ENCODE measurements at regions of chr2 and their contacts with region 1.

Region 1: GRCh38 chr2:213251618-213252017 is 32.6 kb upstream of the SPAG16 start:
- DNase-seq: no peak
- ATAC-seq: peak; percentile 77
- H3K4me3 Mint-ChIP-seq: no peak overlapping the region
- H3K27ac Mint-ChIP-seq: no peak overlapping the region
- H3K4me1 Mint-ChIP-seq: no peaks in the 10 kb centered on the region
- H3K27me3 Mint-ChIP-seq: peaks cover 3% of the 10 kb centered on the region
- CTCF ChIP-seq: peak; percentile 49

Region 2: GRCh38 chr2:212777020-212777491 is 474.6 kb before region 1 on chr2:
- CTCF ChIA-PET with region 1: no interaction called
- POLR2A ChIA-PET with region 1: no interaction called
- intact Hi-C with region 1: loop called (anchors 1 kb)
- DNase-seq: no peak
- ATAC-seq: peak; percentile 52
- H3K4me3 Mint-ChIP-seq: no peak overlapping the region
- H3K27ac Mint-ChIP-seq: no peak overlapping the region
- H3K4me1 Mint-ChIP-seq: peaks cover 3% of the 10 kb centered on the region
- H3K27me3 Mint-ChIP-seq: peaks cover 2% of the 10 kb centered on the region
- CTCF ChIP-seq: peak; percentile 73

Region 3: DNA sequence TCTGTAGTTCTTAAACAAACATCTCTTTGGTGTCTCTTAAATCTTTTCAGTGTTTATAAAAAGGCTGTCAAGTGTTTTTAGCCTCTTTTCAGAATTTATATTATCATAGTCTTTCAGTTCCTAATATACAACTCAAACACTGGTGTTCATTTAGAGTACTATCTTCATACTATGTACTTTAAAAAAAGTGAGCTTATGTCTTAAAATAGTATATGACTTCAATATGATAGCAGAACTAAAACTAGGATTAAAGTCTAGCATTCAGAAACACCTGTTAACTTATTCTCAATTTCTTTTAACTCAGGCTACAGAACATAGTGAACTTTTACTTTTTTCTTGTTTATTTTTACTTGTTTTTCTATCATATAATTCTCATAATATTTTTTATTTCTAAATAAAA is 85.5 kb before region 1 on chr2:
- CTCF ChIA-PET with region 1: no interaction called
- POLR2A ChIA-PET with region 1: no interaction called
- intact Hi-C with region 1: no loop called
- DNase-seq: no peak
- ATAC-seq: peak; percentile 86
- H3K4me3 Mint-ChIP-seq: peak overlapping the region; percentile 30
- H3K27ac Mint-ChIP-seq: peak overlapping the region; percentile 93
- H3K4me1 Mint-ChIP-seq: peaks cover 40% of the 10 kb centered on the region
- H3K27me3 Mint-ChIP-seq: no peaks in the 10 kb centered on the region
- CTCF ChIP-seq: no peak

Region 4: GRCh38 chr2:213232649-213233437 is 18.8 kb before region 1 on chr2:
- CTCF ChIA-PET with region 1: no interaction called
- POLR2A ChIA-PET with region 1: no interaction called
- intact Hi-C with region 1: loop called (anchors 1 kb)
- DNase-seq: peak; percentile 50
- ATAC-seq: peak; percentile 95
- H3K4me3 Mint-ChIP-seq: peak overlapping the region; percentile 64
- H3K27ac Mint-ChIP-seq: peak overlapping the region; percentile 85
- H3K4me1 Mint-ChIP-seq: peaks cover 81% of the 10 kb centered on the region
- H3K27me3 Mint-ChIP-seq: no peaks in the 10 kb centered on the region
- CTCF ChIP-seq: no peak

Region 5: DNA sequence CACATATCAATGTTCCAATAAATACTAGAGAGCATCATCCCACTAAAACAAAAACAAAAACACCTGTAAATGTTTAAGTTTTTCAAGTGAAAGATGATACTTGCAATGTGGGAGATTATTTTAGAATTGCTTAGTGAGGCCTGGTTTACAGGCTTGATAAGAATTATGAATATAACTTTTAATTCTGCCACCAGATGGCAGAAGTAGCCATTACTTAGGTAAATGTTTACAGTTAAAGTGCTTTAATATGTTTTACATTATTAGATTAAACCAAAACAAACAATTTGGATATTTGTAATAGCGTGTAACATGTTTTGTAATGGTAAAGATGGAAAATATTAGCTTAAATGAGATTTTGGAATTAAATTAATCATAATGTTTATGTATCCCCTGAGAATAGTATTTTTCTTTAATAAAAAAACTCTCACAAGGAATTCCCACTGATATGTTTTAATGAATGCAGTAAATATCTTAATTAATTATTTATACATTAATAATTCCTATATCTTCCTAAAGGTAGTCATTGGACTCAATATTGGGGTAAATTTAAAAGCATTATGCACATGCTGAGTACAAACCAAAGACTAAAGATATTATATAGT is 554.6 kb after region 1 on chr2:
- CTCF ChIA-PET with region 1: no interaction called
- POLR2A ChIA-PET with region 1: no interaction called
- intact Hi-C with region 1: loop called (anchors 10 kb)
- DNase-seq: no peak
- ATAC-seq: no peak
- H3K4me3 Mint-ChIP-seq: no peak overlapping the region
- H3K27ac Mint-ChIP-seq: no peak overlapping the region
- H3K4me1 Mint-ChIP-seq: no peaks in the 10 kb centered on the region
- H3K27me3 Mint-ChIP-seq: no peaks in the 10 kb centered on the region
- CTCF ChIP-seq: no peak

Region 6: GRCh38 chr2:214830794-214831346 is 1579.3 kb after region 1 on chr2:
- CTCF ChIA-PET with region 1: no interaction called
- POLR2A ChIA-PET with region 1: no interaction called
- intact Hi-C with region 1: loop called (anchors 1 kb)
- DNase-seq: no peak
- ATAC-seq: no peak
- H3K4me3 Mint-ChIP-seq: no peak overlapping the region
- H3K27ac Mint-ChIP-seq: no peak overlapping the region
- H3K4me1 Mint-ChIP-seq: no peaks in the 10 kb centered on the region
- H3K27me3 Mint-ChIP-seq: no peaks in the 10 kb centered on the region
- CTCF ChIP-seq: no peak